ENCODE measurements at regions of chr11 and their contacts with region 1.

Region 1: DNA sequence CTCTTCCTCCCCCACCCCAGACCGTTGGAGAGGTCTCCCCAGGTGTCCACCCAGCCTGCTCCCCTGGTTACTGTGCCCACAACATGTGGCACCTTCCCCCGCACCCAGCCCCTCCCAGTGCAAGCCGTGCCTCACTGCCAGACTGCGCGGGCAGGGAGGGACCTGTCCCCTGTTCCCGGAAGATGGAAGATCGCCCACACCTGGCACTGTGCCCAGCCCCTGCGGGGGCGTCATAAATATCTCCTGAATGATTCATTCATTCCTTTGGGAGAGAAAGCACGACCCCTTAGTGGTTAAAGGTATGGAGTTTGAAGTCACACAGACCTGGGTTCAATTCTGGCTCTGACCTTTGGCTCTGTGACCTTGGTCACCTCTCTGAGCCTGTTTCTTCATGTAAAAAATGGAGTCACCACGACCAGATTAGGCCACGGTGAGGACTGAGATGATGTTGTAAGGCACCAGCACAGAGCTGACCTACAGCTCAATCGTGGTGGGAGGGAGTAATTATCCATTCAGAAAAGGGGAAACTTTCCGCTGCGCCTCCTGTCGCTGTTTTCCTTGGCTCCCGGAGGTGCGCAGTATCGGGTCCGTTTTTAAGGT is 506 bp upstream of the SYT12 start:
- DNase-seq: no peak
- H3K4me3 ChIP-seq: peak overlapping the region; percentile 53
- CTCF ChIP-seq: no peak

Region 2: GRCh38 chr11:66996609-66997405 is 25.6 kb before region 1 on chr11:
- CTCF ChIA-PET with region 1: interaction called, 13 read pairs
- POLR2A ChIA-PET with region 1: no interaction called
- DNase-seq: peak; percentile 38
- H3K4me3 ChIP-seq: no peak overlapping the region
- CTCF ChIP-seq: no peak

Region 3: GRCh38 chr11:67010323-67010905 is 12.0 kb before region 1 on chr11:
- CTCF ChIA-PET with region 1: interaction called, 20 read pairs
- POLR2A ChIA-PET with region 1: no interaction called
- DNase-seq: no peak
- H3K4me3 ChIP-seq: no peak overlapping the region
- CTCF ChIP-seq: no peak

Measured in AG04449 (cell line).